ENCODE measurements at regions of chr7 and their contacts with region 1.

Region 1: GRCh38 chr7:95286096-95286495 is 38.2 kb downstream of the PON1 start:
- DNase-seq: no peak
- H3K4me3 ChIP-seq: no peak overlapping the region
- H3K27ac ChIP-seq: no peak overlapping the region
- H3K4me1 ChIP-seq: no peaks in the 10 kb centered on the region
- H3K27me3 ChIP-seq: no peaks in the 10 kb centered on the region
- CTCF ChIP-seq: no peak
- EP300 ChIP-seq: no peak
- POLR2A ChIP-seq: no peak

Region 2: GRCh38 chr7:94129443-94130140 is 1156.5 kb before region 1 on chr7:
- intact Hi-C with region 1: loop called in 1 of 4 experiments (anchors 10 kb)
- DNase-seq: no peak
- H3K4me3 ChIP-seq: no peak overlapping the region
- H3K27ac ChIP-seq: peak overlapping the region in 1 of 2 donors; percentile 18
- H3K4me1 ChIP-seq: peaks cover 2% of the 10 kb centered on the region
- H3K27me3 ChIP-seq: no peaks in the 10 kb centered on the region
- CTCF ChIP-seq: no peak
- EP300 ChIP-seq: no peak
- POLR2A ChIP-seq: no peak

Region 3: GRCh38 chr7:97179454-97180104 is 1893.5 kb after region 1 on chr7:
- intact Hi-C with region 1: no loop called
- DNase-seq: peak in 4 of 5 donors; percentile 11 to 34 (median 24)
- H3K4me3 ChIP-seq: no peak overlapping the region
- H3K27ac ChIP-seq: no peak overlapping the region
- H3K4me1 ChIP-seq: no peaks in the 10 kb centered on the region
- H3K27me3 ChIP-seq: no peaks in the 10 kb centered on the region
- CTCF ChIP-seq: peak in 2 of 3 donors; percentile 21 to 64
- EP300 ChIP-seq: no peak
- POLR2A ChIP-seq: no peak

Measured in ovary (tissue), 10 donors.